Posterior cingulate gyrus (tissue), 11 donors: ENCODE measurements at regions of chr5 and their contacts with region 1.

Region 1: GRCh38 chr5:177497292-177498033 is at the start of gene PDLIM7:
- DNase-seq: peak; percentile 67 to 98 (median 86)

Region 2: DNA sequence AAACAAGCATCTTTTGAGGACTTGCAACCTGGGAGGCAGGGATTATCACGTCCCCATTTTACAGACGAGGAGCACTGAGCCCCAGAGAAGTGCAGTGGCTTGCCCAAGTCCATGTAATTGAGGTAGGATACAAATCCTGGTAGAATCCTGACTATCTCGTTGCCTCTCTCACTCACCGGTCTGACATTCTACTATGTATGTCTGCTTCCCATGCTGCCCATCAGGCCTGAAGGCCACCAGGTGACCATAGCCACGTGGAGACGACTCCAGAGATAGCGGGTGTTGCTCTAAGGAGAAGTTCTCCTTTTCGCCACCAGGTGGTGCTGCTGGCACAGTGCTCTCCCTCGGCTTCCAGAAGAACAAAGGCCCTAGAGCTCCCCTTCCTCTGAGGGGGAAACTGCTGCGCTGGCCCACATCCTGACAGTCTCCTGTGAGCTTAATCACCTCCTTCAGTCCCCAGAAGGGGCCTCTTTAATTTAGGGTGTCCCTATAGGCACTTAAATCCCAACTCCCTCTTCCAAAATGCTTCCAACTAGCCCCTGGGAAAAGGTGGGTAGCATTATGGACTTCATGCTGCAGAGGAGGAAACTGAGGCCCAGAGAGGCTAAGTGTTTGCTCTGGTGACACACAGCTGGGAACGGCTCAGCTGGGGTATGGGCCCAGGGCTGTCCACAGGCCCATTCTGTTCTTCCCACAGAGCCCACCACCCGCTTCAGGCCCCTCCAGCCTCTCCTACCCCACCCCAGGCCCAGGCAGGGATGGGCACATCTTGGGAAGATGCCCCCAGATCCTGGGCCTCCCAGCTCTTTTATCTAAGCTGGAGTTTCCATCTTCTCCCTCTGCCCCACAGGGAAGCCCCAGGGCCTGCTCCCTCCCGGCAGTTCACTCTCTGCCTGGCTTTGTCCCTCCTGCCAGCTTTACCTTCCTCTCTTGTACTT is 106.8 kb before region 1 on chr5:
- intact Hi-C with region 1: loop called (anchors 1 kb)
- DNase-seq: peak; percentile 49 to 97 (median 83)

Region 3: DNA sequence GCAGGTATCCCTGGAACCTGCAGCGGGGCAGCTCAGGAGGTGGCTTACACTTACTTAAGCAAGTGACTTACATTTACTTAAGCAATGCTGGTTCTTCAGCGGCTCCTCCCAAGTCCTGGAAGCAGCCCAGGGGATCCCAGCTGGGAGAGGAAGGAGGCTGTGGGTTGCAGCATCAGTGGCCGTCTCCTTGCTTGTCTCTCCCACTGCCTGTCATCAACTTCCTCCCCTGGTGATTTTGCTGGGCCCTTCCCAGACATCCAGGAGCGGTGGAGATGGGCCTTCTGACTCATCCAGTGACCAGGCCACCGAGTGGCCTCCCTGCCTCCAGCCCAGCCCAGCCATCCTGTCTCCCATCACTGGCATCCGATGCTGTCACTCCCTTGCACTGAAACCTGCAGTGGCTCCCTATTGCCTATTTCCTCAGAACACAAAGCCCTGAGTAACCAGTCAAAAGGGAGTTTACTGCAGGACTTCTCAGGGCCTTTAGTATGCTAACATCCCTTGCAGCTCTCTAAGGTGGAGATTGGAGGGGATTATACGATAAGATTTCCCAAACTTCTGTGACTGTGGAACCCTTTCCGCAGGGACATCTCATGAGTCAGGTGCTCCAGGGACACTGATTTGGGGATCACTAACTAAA is 891.0 kb after region 1 on chr5:
- intact Hi-C with region 1: no loop called
- DNase-seq: peak in 1 of 10 donors; percentile 75